ENCODE measurements at regions of chr3 and their contacts with region 1.

Region 1: DNA sequence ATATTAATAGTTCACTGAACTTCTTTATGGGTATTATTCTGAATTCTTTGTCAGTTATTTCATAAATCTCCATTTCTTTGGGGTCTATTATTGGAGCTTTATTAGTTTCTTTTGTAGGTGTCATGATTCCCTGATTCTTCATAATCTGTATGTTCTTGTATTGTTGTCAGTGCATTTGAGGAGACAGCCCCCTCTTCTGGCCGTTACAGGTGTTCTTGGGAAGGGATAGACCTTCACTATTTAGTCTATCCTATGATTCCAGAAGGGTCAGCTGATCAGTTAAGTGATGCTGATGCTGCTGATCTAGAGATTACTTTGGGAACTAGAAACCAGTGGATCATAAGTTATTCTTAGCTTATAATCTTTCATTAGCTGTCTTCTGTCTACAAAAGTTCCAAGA is 34.9 kb downstream of the TMEM39A start:
- DNase-seq: no peak
- H3K4me3 Mint-ChIP-seq: no peak overlapping the region
- H3K27ac Mint-ChIP-seq: no peak overlapping the region
- H3K4me1 Mint-ChIP-seq: no peaks in the 10 kb centered on the region
- H3K27me3 Mint-ChIP-seq: no peaks in the 10 kb centered on the region
- CTCF ChIP-seq: no peak

Region 2: GRCh38 chr3:119293871-119294695 is 134.5 kb before region 1 on chr3 and contains the start of gene ARHGAP31:
- CTCF ChIA-PET with region 1: interaction called, 4 read pairs
- POLR2A ChIA-PET with region 1: interaction called, 3 read pairs
- intact Hi-C with region 1: loop called (anchors 5 kb)
- DNase-seq: peak; percentile 51
- H3K4me3 Mint-ChIP-seq: peak within 1 kb of the TSS; percentile 81
- H3K27ac Mint-ChIP-seq: peak within 1 kb of the TSS; percentile 63
- H3K4me1 Mint-ChIP-seq: peaks cover 13% of the 10 kb centered on the region
- H3K27me3 Mint-ChIP-seq: no peaks in the 10 kb centered on the region
- CTCF ChIP-seq: no peak
- total RNA-seq, gene ARHGAP31: 4.4 and 4.7 TPM in 2 replicates

Region 3: GRCh38 chr3:119396870-119397269 is 31.7 kb before region 1 on chr3:
- CTCF ChIA-PET with region 1: no interaction called
- POLR2A ChIA-PET with region 1: no interaction called
- intact Hi-C with region 1: no loop called
- DNase-seq: no peak
- H3K4me3 Mint-ChIP-seq: no peak overlapping the region
- H3K27ac Mint-ChIP-seq: no peak overlapping the region
- H3K4me1 Mint-ChIP-seq: no peaks in the 10 kb centered on the region
- H3K27me3 Mint-ChIP-seq: no peaks in the 10 kb centered on the region
- CTCF ChIP-seq: no peak

Region 4: GRCh38 chr3:119944091-119944490 is 515.6 kb after region 1 on chr3:
- CTCF ChIA-PET with region 1: no interaction called
- POLR2A ChIA-PET with region 1: no interaction called
- intact Hi-C with region 1: no loop called
- DNase-seq: no peak
- H3K4me3 Mint-ChIP-seq: no peak overlapping the region
- H3K27ac Mint-ChIP-seq: no peak overlapping the region
- H3K4me1 Mint-ChIP-seq: peaks cover 14% of the 10 kb centered on the region
- H3K27me3 Mint-ChIP-seq: no peaks in the 10 kb centered on the region
- CTCF ChIP-seq: no peak